Breast epithelium (tissue), 4 donors: ENCODE measurements at regions of chr4 and their contacts with region 1.

Region 1: GRCh38 chr4:35975617-35976355 is 268.5 kb downstream of the ARAP2 start:
- DNase-seq: no peak
- H3K4me3 ChIP-seq: no peak overlapping the region
- H3K27ac ChIP-seq: no peak overlapping the region
- H3K4me1 ChIP-seq: no peaks in the 10 kb centered on the region
- H3K27me3 ChIP-seq: no peaks in the 10 kb centered on the region
- CTCF ChIP-seq: no peak
- POLR2A ChIP-seq: no peak

Region 2: GRCh38 chr4:35163168-35163567 is 812.6 kb before region 1 on chr4:
- intact Hi-C with region 1: no loop called
- DNase-seq: no peak
- H3K4me3 ChIP-seq: no peak overlapping the region
- H3K27ac ChIP-seq: no peak overlapping the region
- H3K4me1 ChIP-seq: no peaks in the 10 kb centered on the region
- H3K27me3 ChIP-seq: no peaks in the 10 kb centered on the region
- CTCF ChIP-seq: no peak
- POLR2A ChIP-seq: no peak

Region 3: DNA sequence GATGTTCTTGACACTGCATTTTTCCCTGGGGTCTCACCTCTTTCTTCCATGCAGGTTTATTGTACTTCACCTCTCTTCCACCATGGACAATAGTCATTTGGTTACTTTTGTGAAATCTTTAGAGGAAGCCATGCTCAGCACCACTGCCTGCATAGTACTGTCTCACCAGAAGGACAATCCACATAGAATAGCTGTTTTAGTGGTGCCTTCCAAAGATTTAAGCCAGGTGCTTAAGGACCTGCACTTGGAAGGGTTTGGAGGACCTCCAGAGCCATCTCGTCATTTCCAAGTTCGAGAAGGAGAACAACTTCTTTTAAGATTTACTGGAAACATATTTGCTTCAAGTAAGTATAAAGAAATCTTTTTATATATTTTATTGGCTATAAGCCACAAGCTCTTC is 332.4 kb after region 1 on chr4:
- intact Hi-C with region 1: loop called (anchors 5 kb)
- DNase-seq: no peak
- H3K4me3 ChIP-seq: no peak overlapping the region
- H3K27ac ChIP-seq: no peak overlapping the region
- H3K4me1 ChIP-seq: no peaks in the 10 kb centered on the region
- H3K27me3 ChIP-seq: no peaks in the 10 kb centered on the region
- CTCF ChIP-seq: no peak
- POLR2A ChIP-seq: no peak